HepG2 (cell line): ENCODE measurements at regions of chr12 and their contacts with region 1.

Region 1: GRCh38 chr12:5200278-5201087 is 156.8 kb downstream of the KCNA5 start:
- DNase-seq: peak; percentile 18
- ATAC-seq: peak; percentile 94
- H3K4me3 ChIP-seq: no peak overlapping the region
- H3K27ac ChIP-seq: no peak overlapping the region
- H3K4me1 ChIP-seq: no peaks in the 10 kb centered on the region
- H3K27me3 ChIP-seq: peaks cover 0 to 3% of the 10 kb centered on the region in 2 experiments; a peak in 1 of 5 replicates
- CTCF ChIP-seq: peak; percentile 85
- EP300 ChIP-seq: no peak
- POLR2A ChIP-seq: no peak
- RAD21 ChIP-seq: peak; percentile 51; the same call in 1 of the 2 replicates

Region 2: DNA sequence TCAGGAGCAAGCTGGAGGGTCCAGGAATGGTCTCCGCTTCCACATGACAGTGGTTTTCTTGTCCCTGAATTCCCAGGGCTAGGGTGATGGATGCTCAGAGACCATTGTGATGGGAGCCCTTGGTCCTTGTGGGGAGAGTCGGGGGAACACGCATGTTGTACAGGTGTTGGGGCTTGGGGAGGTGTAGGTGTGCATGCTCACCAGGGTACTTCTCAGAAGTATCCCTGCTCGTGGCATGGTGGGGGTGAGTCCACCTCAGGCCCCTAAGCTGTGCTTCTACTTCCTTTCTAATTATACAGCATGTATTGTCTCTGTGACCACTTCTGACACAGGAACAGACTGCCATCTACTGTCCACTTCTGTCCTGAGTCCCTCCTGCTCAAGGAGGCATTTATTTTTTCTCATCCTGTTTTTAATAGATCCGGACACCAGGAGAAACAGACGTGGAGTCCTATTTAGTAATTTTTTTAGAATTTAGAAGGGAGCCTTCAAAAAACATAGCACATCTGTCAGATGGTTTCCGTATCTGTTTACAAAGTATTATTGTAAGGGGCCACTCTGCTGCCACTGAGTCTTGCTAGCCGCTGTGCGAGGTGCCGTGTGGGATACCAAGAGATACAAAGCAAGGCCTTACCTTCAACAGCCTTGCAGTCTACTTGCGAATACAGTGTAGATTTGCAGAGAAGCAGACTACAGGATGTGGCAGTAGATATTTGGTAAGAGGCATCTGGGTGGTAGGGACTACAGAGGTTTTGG is 241.9 kb after region 1 on chr12:
- CTCF ChIA-PET with region 1: interaction called, 11 read pairs
- POLR2A ChIA-PET with region 1: no interaction called
- in situ Hi-C with region 1: loop called (anchors 5 kb)
- intact Hi-C with region 1: no loop called
- DNase-seq: peak; percentile 34
- ATAC-seq: peak; percentile 76
- H3K4me3 ChIP-seq: no peak overlapping the region
- H3K27ac ChIP-seq: no peak overlapping the region
- H3K4me1 ChIP-seq: no peaks in the 10 kb centered on the region
- H3K27me3 ChIP-seq: peaks cover 0 to 8% of the 10 kb centered on the region in 2 experiments; a peak in 2 of 5 replicates
- CTCF ChIP-seq: peak; percentile 53
- EP300 ChIP-seq: no peak
- POLR2A ChIP-seq: no peak
- RAD21 ChIP-seq: 0 out of 2 replicates have a peak, but pooled peaks have one; percentile 25

Region 3: DNA sequence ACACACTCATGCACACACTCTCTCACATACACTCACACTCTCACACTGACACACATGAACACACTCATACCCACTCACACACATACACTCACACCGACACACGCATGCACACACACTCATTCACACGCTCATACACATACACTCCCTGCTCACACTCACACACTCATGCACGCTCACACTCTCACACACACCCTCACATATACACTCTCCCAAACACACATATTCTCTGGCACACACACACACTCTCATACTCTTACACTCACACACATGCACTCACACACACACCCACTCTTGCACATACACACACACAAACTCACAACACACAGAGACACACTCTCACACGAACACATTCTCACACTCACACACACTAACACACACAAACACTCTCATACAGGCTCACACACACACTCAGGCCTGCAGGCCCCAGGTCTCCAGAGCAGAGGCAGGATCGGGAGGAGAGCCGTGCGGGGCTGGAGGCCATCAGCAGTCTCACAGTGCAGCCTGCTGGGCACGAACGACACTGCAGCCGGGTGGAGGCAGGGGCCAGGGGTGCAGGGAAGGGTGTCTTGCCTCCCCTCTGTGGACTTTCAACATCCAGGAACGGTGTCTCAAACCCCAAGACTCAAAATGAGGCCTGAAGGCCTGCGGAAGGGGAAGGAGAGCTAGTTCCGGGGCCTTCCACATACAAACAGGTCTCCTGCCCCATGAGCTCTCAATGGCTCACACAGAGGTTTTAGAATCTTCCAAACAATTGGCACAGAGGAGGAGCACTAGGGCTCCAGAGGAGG is 595.9 kb after region 1 on chr12:
- CTCF ChIA-PET with region 1: interaction called, 3 read pairs
- POLR2A ChIA-PET with region 1: no interaction called
- in situ Hi-C with region 1: loop called (anchors 10 kb)
- intact Hi-C with region 1: no loop called
- DNase-seq: peak; percentile 5
- ATAC-seq: peak; percentile 98
- H3K4me3 ChIP-seq: no peak overlapping the region
- H3K27ac ChIP-seq: no peak overlapping the region
- H3K4me1 ChIP-seq: no peaks in the 10 kb centered on the region
- H3K27me3 ChIP-seq: peaks cover 1 to 6% of the 10 kb centered on the region in 2 experiments; a peak in 2 of 5 replicates
- CTCF ChIP-seq: peak; percentile 88
- EP300 ChIP-seq: no peak
- POLR2A ChIP-seq: no peak
- RAD21 ChIP-seq: peak; percentile 77